ENCODE measurements at regions of chr12 and their contacts with region 1.

Region 1: GRCh38 chr12:14884458-14884878 is 1.2 kb downstream of the MGP start:
- DNase-seq: peak; percentile 89
- ATAC-seq: peak; percentile 95
- H3K4me3 ChIP-seq: peak overlapping the region in 1 of 5 experiments; percentile 11
- H3K4me3 Mint-ChIP-seq: peak overlapping the region; percentile 77
- H3K27ac ChIP-seq: peak overlapping the region in 1 of 2 donors; percentile 67
- H3K27ac Mint-ChIP-seq: peak overlapping the region; percentile 80
- H3K4me1 ChIP-seq: peaks cover 27 to 44% of the 10 kb centered on the region in 2 donors
- H3K4me1 Mint-ChIP-seq: peaks cover 48% of the 10 kb centered on the region
- H3K27me3 ChIP-seq: peaks cover 0 to 12% (median 8%) of the 10 kb centered on the region in 4 experiments
- H3K27me3 Mint-ChIP-seq: peaks cover 38% of the 10 kb centered on the region
- CTCF ChIP-seq: no peak

Region 2: DNA sequence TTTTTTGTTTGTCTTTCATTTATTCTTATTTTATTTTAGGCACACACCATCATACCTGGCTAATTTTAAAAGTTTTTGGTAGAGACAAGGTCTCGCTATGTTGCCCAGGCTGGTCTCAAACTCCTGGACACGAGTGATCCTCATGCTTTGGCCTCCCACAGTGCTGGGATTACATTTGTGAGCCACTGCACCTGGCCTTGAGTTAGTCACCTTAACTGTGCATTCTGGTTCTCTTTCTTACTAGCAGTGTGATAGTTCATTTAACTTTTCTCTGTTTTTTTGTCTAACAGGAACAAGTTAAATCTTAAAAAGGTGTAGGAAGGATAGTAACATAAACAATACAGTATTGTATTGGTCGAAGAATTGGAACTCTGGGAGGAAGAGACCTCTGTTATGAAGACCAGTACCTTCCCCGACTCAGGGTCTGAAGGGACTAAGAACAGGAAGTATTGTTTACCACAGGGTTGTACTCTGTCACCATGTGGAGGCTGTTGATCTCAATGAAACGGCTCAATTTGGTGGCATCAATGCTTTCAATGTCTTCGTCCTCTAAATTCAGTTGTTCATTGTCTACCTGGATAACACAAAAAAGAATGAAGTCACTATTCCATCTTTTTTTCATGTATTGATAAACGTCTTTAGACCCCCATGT is 36.1 kb after region 1 on chr12:
- CTCF ChIA-PET with region 1: no interaction called
- POLR2A ChIA-PET with region 1: interaction called, 3 read pairs
- intact Hi-C with region 1: loop called (anchors 5 kb)
- DNase-seq: peak; percentile 25
- ATAC-seq: peak; percentile 65
- H3K4me3 ChIP-seq: peak overlapping the region in 1 of 5 experiments; percentile 4
- H3K4me3 Mint-ChIP-seq: peak overlapping the region; percentile 45
- H3K27ac ChIP-seq: peak overlapping the region in 1 of 2 donors; percentile 67
- H3K27ac Mint-ChIP-seq: peak overlapping the region; percentile 76
- H3K4me1 ChIP-seq: peaks cover 7 to 15% of the 10 kb centered on the region in 2 donors
- H3K4me1 Mint-ChIP-seq: peaks cover 16% of the 10 kb centered on the region
- H3K27me3 ChIP-seq: no peaks in the 10 kb centered on the region
- H3K27me3 Mint-ChIP-seq: no peaks in the 10 kb centered on the region
- CTCF ChIP-seq: no peak

Measured in B cell (primary cell).